Right cardiac atrium (tissue), 5 donors: ENCODE measurements at regions of chr5 and their contacts with region 1.

Region 1: GRCh38 chr5:91361055-91361701 is 21.9 kb downstream of the ARRDC3 start:
- DNase-seq: no peak
- ATAC-seq: no peak
- H3K4me3 ChIP-seq: no peak overlapping the region
- H3K27ac ChIP-seq: no peak overlapping the region
- H3K4me1 ChIP-seq: peaks cover 3% of the 10 kb centered on the region
- H3K27me3 ChIP-seq: no peaks in the 10 kb centered on the region

Region 2: GRCh38 chr5:90802474-90803317 is 558.5 kb before region 1 on chr5:
- intact Hi-C with region 1: no loop called
- DNase-seq: no peak
- ATAC-seq: no peak
- H3K4me3 ChIP-seq: no peak overlapping the region
- H3K27ac ChIP-seq: no peak overlapping the region
- H3K4me1 ChIP-seq: no peaks in the 10 kb centered on the region
- H3K27me3 ChIP-seq: no peaks in the 10 kb centered on the region

Region 3: GRCh38 chr5:91311697-91312501 is 49.3 kb before region 1 on chr5:
- intact Hi-C with region 1: loop called in 1 of 4 experiments (anchors 10 kb)
- DNase-seq: peak; percentile 81 to 87 (median 82)
- ATAC-seq: peak; percentile 87 to 88
- H3K4me3 ChIP-seq: no peak overlapping the region
- H3K27ac ChIP-seq: peak overlapping the region; percentile 97
- H3K4me1 ChIP-seq: peaks cover 4% of the 10 kb centered on the region
- H3K27me3 ChIP-seq: no peaks in the 10 kb centered on the region

Region 4: DNA sequence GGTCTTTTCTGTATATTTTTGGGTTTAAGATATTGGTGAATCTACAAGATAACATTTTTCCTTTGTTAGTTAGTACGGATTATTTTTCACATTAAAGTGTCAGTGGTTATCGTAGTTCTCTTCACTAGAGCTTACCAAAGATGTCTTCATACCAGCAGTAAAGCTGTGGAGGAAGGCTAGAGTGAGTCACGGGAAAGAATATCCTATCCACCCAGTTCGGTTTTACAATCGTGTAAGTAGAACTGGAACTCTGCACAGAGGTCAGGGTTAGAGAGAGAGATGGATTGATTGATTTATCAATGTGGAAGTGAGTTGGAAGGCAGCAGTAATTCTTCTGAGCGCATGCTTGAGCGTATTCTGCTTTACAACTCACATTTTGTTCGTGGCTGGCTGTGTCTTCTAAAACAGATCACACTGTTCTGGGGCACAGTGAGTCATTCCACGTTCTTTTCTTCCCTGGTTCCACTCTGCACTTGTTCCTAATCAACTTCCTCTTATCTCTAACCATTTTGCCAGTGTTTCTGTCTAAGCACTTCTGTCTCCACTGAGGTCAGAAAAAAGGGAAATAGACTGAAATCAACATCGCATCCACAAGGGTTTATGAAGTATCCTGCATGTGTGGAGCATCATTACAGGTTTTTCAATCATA is 108.5 kb after region 1 on chr5:
- intact Hi-C with region 1: no loop called
- DNase-seq: no peak
- ATAC-seq: peak; percentile 79 to 81
- H3K4me3 ChIP-seq: no peak overlapping the region
- H3K27ac ChIP-seq: no peak overlapping the region
- H3K4me1 ChIP-seq: no peaks in the 10 kb centered on the region
- H3K27me3 ChIP-seq: no peaks in the 10 kb centered on the region

Region 5: DNA sequence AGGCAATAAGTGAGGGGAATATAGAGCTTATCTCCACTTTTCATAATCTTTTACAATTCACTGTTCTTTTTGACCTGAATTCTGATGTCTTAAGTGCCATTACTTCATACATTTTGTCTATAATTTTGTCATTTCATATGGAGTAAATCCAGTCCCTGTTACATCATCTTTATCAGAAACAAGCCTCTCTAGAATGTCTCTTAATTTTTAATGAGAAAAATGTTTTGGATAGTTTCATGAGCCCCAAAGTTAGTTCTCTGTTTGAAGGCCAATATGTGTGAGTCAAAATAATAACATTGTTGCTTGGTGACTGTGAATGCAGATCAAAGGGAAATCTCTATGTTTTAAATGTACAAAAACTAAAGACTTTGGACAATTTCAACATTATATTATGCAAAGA is 351.5 kb after region 1 on chr5:
- intact Hi-C with region 1: no loop called
- DNase-seq: no peak
- ATAC-seq: no peak
- H3K4me3 ChIP-seq: no peak overlapping the region
- H3K27ac ChIP-seq: no peak overlapping the region
- H3K4me1 ChIP-seq: no peaks in the 10 kb centered on the region
- H3K27me3 ChIP-seq: no peaks in the 10 kb centered on the region